Activated B cell treated with CpG ODN at 0.5 μM for 24 hours (primary cell): ENCODE measurements at regions of chr11 and their contacts with region 1.

Region 1: DNA sequence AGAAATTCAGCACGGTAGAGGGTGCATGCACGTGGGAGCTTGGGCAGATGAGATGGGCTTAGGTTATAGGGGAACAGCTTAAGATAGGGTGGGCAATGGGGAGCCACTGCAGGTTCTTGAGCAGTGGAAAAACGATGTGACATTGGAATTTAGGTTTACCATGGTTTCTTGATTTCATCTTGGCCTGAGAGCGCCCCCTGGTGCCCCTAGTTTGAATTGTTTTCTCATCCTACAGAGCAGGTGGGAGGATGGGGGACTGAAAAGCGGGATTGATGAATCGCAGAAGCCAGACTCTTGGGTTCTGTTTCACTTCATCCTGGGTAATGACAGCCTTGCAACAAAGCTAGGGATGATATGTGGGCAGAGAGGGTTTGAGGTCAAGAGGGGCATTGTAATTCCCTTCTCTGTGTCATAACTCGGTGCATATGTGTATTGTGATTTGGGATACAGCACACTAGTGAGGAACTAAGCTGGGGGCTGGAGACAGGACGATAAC is 6.7 kb upstream of the MCAM start:
- DNase-seq: peak; percentile 57
- ATAC-seq: no peak
- H3K4me3 Mint-ChIP-seq: peak overlapping the region; percentile 44
- H3K27ac Mint-ChIP-seq: no peak overlapping the region
- H3K4me1 Mint-ChIP-seq: peaks cover 30% of the 10 kb centered on the region
- H3K27me3 Mint-ChIP-seq: peaks cover 11% of the 10 kb centered on the region
- CTCF ChIP-seq: peak; percentile 61

Region 2: GRCh38 chr11:119144825-119145486 is 178.6 kb before region 1 on chr11:
- CTCF ChIA-PET with region 1: interaction called, 3 read pairs
- POLR2A ChIA-PET with region 1: no interaction called
- intact Hi-C with region 1: loop called (anchors 2 kb)
- DNase-seq: no peak
- ATAC-seq: peak; percentile 78
- H3K4me3 Mint-ChIP-seq: no peak overlapping the region
- H3K27ac Mint-ChIP-seq: no peak overlapping the region
- H3K4me1 Mint-ChIP-seq: peaks cover 12% of the 10 kb centered on the region
- H3K27me3 Mint-ChIP-seq: peaks cover 41% of the 10 kb centered on the region
- CTCF ChIP-seq: no peak

Region 3: DNA sequence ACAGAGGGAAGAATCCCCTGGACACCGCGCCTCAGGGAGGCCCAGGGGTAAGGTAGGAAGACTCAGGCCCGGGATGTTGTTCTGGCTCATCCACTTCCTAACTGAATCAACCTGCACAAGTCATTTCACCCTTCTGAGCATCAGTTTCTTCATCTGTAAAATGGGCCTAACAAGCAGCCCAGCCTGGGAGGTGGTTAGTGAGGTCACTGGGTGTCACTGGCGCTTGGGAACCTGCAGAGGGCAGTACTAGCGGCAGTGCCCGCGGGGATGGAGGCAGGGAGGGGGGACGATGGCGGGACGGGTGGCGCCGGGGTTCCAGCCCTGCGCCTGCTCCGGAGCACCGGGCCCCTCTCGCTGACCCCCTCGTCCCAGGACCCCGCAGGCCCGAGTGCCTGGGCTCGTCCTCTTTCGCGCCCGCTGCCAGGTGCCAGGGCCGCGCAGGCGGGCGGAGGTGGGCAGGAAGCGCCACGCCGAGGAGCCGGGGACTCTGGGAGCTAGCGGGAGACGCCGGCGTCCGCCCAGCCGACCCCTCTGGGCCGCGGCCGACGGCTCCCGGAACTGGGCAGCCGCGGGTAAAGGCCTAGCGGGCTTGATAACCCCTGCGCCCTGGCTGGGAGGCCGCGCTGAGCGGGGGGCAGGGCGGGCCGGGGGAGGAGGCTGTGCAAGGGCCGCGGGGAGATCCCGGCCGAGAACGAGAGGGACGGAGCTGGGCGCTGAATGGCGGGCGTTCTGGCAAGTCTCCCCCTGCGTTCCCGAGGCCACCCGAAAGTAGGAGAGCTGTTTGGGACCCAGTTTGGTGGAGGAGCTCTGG is 154.9 kb before region 1 on chr11 and contains the start of gene NLRX1:
- CTCF ChIA-PET with region 1: interaction called, 7 read pairs
- POLR2A ChIA-PET with region 1: interaction called, 3 read pairs
- intact Hi-C with region 1: loop called (anchors 1 kb)
- DNase-seq: peak; percentile 74
- ATAC-seq: peak; percentile 97
- H3K4me3 Mint-ChIP-seq: peak within 1 kb of the TSS; percentile 86
- H3K27ac Mint-ChIP-seq: peak within 1 kb of the TSS; percentile 50
- H3K4me1 Mint-ChIP-seq: peaks cover 5% of the 10 kb centered on the region
- H3K27me3 Mint-ChIP-seq: no peaks in the 10 kb centered on the region
- CTCF ChIP-seq: peak; percentile 69
- total RNA-seq, gene NLRX1: 9.8 TPM in 2 replicates

Region 4: GRCh38 chr11:119205574-119206510 is 117.7 kb before region 1 on chr11 and contains the start of gene CBL:
- CTCF ChIA-PET with region 1: interaction called, 4 read pairs
- POLR2A ChIA-PET with region 1: interaction called, 3 read pairs
- intact Hi-C with region 1: loop called (anchors 1 kb)
- DNase-seq: peak; percentile 95
- ATAC-seq: peak; percentile 86
- H3K4me3 Mint-ChIP-seq: peak within 1 kb of the TSS; percentile 96
- H3K27ac Mint-ChIP-seq: peak within 1 kb of the TSS; percentile 90
- H3K4me1 Mint-ChIP-seq: peaks cover 31% of the 10 kb centered on the region
- H3K27me3 Mint-ChIP-seq: no peaks in the 10 kb centered on the region
- CTCF ChIP-seq: no peak
- total RNA-seq, gene CBL: 26.2 and 27.8 TPM in 2 replicates

Region 5: DNA sequence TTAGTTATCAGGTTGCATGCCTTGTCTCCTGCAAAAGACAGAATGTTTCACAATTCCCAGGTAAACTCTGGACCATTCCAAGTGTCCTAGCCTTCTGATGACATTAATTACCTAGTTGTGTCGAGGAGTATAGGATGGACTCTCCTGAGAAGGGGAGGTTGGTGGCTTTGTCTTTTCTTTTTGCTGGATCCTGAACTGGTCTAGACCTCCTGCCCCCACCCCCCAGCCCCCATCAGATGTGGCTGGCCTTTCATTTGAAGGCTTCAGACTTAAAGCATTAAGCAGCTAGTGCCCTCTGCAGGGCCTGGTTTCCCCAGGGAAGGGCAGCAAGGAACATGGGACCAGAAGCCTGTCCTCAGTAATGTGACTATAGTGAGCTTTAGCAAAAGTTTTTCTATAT is 16.4 kb before region 1 on chr11:
- CTCF ChIA-PET with region 1: interaction called, 18 read pairs
- POLR2A ChIA-PET with region 1: no interaction called
- intact Hi-C with region 1: no loop called
- DNase-seq: no peak
- ATAC-seq: no peak
- H3K4me3 Mint-ChIP-seq: no peak overlapping the region
- H3K27ac Mint-ChIP-seq: no peak overlapping the region
- H3K4me1 Mint-ChIP-seq: no peaks in the 10 kb centered on the region
- H3K27me3 Mint-ChIP-seq: peaks cover under 1% of the 10 kb centered on the region
- CTCF ChIP-seq: no peak

Region 6: DNA sequence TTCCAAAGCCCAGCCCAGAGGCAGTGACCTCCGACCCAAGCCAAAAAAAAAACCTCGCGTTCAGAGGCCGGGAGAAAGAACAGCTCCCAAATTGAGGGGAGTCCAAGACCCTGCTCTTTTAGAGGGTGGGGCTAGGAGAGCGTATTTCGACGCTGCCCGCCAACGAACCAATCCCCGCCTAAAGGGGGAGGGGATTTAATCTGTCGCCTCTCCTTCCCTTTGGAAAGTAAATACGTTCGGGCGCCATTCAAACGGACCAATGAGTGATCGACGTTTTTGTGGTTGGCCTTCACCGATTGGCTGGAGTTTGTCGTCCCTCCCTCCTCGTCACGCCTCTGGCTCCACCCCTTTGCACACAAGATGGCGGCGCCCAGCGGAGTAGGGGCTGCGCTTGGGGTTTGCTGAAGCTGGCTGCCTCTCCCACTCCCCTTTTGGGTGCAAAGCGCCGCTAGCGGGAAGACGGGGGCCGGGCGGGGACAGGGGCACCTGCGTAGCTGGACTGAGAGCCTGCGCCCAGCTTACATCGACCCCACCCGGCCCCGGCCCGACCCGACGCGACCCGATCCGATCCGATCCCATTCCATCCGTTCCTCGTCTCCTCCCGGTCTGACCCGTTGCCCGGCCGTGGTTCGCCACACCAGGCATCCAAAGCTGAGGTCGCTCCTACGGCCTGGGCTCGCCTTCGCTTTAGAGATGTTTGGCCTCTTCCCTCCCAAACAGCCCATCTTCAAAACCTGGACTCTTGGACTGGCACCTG is 10.8 kb after region 1 on chr11 and contains the start of gene RNF26:
- CTCF ChIA-PET with region 1: interaction called, 38 read pairs
- POLR2A ChIA-PET with region 1: interaction called, 10 read pairs
- intact Hi-C with region 1: loop called (anchors 1 kb)
- DNase-seq: peak; percentile 87
- ATAC-seq: peak; percentile 97
- H3K4me3 Mint-ChIP-seq: peak within 1 kb of the TSS; percentile 99
- H3K27ac Mint-ChIP-seq: peak within 1 kb of the TSS; percentile 93
- H3K4me1 Mint-ChIP-seq: peaks cover 31% of the 10 kb centered on the region
- H3K27me3 Mint-ChIP-seq: peaks cover 9% of the 10 kb centered on the region
- CTCF ChIP-seq: no peak
- total RNA-seq, gene RNF26: 20.1 and 21.2 TPM in 2 replicates

Region 7: GRCh38 chr11:119347242-119347641 is 23.7 kb after region 1 on chr11:
- CTCF ChIA-PET with region 1: no interaction called
- POLR2A ChIA-PET with region 1: no interaction called
- intact Hi-C with region 1: no loop called
- DNase-seq: no peak
- ATAC-seq: no peak
- H3K4me3 Mint-ChIP-seq: no peak overlapping the region
- H3K27ac Mint-ChIP-seq: no peak overlapping the region
- H3K4me1 Mint-ChIP-seq: no peaks in the 10 kb centered on the region
- H3K27me3 Mint-ChIP-seq: peaks cover 50% of the 10 kb centered on the region
- CTCF ChIP-seq: no peak

Region 8: DNA sequence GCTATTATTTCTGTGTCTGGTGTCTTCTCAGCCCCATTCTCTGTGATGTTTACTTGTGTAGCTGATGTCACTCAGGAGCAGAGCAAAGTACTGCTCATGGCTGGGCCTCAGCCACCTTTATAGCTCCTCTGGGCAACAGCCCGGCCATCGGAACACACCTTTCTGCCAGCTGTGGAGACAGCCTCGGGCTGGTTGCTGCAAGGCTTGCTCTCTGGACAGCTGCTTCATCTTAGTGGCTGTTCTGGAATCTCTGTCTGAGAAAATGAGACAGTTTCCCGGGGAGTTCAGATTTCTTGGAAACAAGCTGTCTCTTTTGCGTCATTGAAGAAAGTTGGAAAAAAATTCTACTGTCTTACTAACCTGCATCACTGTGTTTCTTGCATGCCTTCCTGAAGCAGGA is 79.4 kb after region 1 on chr11:
- CTCF ChIA-PET with region 1: no interaction called
- POLR2A ChIA-PET with region 1: no interaction called
- intact Hi-C with region 1: no loop called
- DNase-seq: no peak
- ATAC-seq: no peak
- H3K4me3 Mint-ChIP-seq: no peak overlapping the region
- H3K27ac Mint-ChIP-seq: no peak overlapping the region
- H3K4me1 Mint-ChIP-seq: peaks cover 3% of the 10 kb centered on the region
- H3K27me3 Mint-ChIP-seq: peaks cover 23% of the 10 kb centered on the region
- CTCF ChIP-seq: no peak